Dendritic cell treated with granulocyte-macrophage colony-stimulating factor and Interleukin-4, amounts not matched to agents 40 ng/mL and 50 ng/mL, for 4 days (primary cell): ENCODE measurements at regions of chr4 and their contacts with region 1.

Region 1: DNA sequence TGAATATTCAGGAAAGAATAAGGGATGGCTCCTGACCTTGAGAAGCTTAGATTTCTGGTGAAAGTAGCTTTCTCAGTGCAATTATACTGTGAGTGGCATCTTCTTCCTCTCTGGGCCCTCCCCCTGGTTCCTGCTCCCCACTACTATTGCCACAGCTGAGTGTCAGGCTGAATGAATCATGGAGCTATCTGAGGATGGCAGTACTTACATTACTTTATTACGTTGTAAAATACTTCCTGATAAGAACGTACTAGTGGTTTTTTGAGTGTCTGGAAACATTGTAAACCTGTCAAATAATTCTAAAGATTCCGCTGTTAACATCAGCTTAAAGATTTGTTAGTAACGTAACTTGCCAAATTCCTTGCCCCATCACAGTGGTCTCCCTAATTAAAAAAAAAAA is 36.2 kb downstream of the ARHGAP10 start:
- H3K4me3 Mint-ChIP-seq: no peak overlapping the region
- H3K27ac Mint-ChIP-seq: no peak overlapping the region
- H3K4me1 Mint-ChIP-seq: peaks cover 81% of the 10 kb centered on the region
- H3K27me3 Mint-ChIP-seq: no peaks in the 10 kb centered on the region

Region 2: GRCh38 chr4:147736458-147736857 is 31.7 kb before region 1 on chr4:
- intact Hi-C with region 1: loop called (anchors 5 kb)
- H3K4me3 Mint-ChIP-seq: peak overlapping the region; percentile 89
- H3K27ac Mint-ChIP-seq: peak overlapping the region; percentile 51
- H3K4me1 Mint-ChIP-seq: peaks cover 68% of the 10 kb centered on the region
- H3K27me3 Mint-ChIP-seq: no peaks in the 10 kb centered on the region

Region 3: DNA sequence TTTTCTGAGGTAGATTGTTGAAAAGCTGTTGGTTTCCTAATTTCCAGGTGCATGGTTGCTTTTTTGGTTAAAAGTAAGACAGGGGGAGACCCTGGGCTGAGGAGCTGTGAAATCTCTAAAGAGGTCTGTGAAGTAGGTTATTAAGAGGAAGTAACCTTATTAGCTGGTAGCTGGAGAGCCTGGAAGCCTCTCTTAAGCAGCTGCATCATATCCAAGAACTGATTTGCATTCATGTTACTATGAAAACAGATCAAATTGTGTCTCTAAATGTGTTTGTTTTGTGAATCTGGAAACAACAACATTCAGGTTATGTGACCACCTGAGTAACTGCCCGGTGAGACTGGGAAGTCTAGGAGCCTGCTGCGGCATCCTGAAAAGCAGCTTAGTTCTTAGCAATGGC is 17.9 kb after region 1 on chr4:
- intact Hi-C with region 1: loop called (anchors 2 kb)
- H3K4me3 Mint-ChIP-seq: no peak overlapping the region
- H3K27ac Mint-ChIP-seq: peak overlapping the region; percentile 88
- H3K4me1 Mint-ChIP-seq: peaks cover 61% of the 10 kb centered on the region
- H3K27me3 Mint-ChIP-seq: no peaks in the 10 kb centered on the region

Region 4: DNA sequence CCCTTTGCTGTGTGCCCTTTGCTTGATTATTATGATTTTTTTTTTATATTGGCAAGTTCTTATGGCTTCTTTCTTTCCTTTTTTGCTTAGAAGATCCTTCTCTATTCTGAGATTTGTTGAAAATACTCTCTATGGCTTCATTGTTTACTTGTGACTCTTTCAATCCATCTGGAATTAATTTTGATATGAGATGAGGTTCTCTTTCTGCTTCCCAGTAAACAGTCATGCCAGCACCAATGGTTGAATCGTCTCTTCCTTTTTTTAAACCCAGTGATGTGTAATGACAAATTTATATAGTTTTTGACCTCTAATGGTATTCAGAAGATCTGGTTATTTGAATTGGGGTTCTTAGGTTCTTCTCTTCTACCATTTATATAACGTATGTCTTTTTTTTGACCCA is 85.6 kb after region 1 on chr4:
- intact Hi-C with region 1: no loop called
- H3K4me3 Mint-ChIP-seq: no peak overlapping the region
- H3K27ac Mint-ChIP-seq: peak overlapping the region; percentile 75
- H3K4me1 Mint-ChIP-seq: peaks cover 35% of the 10 kb centered on the region
- H3K27me3 Mint-ChIP-seq: no peaks in the 10 kb centered on the region